ENCODE measurements at regions of chr10 and their contacts with region 1.

Region 1: DNA sequence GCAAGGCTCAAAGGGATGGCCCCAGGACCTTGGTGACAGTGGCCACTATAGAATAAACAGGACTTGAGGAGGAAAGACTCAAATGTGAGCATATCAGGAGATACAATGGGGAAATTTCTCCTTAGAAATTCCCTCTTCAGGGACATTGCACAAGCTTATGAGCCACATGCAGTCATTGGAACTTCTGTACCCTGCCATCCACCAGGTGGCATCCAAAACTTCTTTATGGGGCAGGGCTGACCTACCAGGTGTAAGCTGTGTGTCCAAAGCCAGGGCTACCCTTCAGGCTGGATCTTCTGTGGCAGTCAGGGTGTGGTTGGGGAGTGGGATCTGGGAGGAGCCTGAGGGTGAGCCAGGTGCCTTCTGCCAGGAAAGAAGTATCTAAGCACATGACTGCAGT is 36.6 kb upstream of the LRRC18 start:
- DNase-seq: no peak
- H3K4me3 ChIP-seq: no peak overlapping the region
- CTCF ChIP-seq: no peak
- POLR2A ChIP-seq: no peak

Region 2: GRCh38 chr10:48464871-48465736 is 511.1 kb before region 1 on chr10:
- intact Hi-C with region 1: loop called (anchors 5 kb)
- DNase-seq: peak in 1 of 2 donors; percentile 76
- H3K4me3 ChIP-seq: no peak overlapping the region
- CTCF ChIP-seq: no peak
- POLR2A ChIP-seq: no peak

Region 3: GRCh38 chr10:49164559-49165188 is 188.5 kb after region 1 on chr10:
- intact Hi-C with region 1: loop called (anchors 10 kb)
- DNase-seq: no peak
- H3K4me3 ChIP-seq: no peak overlapping the region
- CTCF ChIP-seq: no peak
- POLR2A ChIP-seq: no peak

Region 4: DNA sequence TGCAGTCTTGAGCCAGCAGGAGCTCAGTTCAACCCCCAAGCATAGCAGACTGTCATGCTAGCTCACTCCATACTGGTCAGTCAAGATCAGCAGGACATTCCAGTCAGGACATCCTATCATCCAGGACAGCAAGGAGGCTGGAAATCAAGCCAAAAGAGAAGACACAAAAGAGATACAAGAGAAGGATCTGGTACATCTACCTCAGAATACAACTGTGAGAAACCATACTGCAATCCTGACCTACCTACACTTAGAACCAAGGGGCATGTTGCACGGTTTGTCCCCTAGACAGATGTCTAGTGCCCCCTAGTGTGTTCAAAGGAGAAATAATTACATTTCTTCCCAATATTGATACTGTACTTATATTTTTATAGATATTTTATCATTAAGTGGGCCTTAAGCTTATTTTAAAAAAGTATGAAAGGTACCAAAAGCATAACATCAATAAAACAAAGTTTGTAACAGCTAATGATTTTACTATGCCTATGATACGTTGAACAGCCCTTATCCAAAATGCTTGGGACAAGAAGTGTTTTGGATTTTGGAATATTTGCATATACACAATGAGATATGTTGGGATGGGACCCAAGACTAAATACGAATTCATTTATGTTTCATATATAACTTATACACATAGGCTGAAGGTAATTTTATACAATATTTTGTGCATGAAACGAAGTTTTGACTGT is 536.1 kb after region 1 on chr10:
- intact Hi-C with region 1: loop called (anchors 5 kb)
- DNase-seq: no peak
- H3K4me3 ChIP-seq: no peak overlapping the region
- CTCF ChIP-seq: no peak
- POLR2A ChIP-seq: no peak